Activated CD8-positive, alpha-beta T cell treated with anti-CD3 and anti-CD28 coated beads for 36 hours (primary cell): ENCODE measurements at regions of chr1 and their contacts with region 1.

Region 1: DNA sequence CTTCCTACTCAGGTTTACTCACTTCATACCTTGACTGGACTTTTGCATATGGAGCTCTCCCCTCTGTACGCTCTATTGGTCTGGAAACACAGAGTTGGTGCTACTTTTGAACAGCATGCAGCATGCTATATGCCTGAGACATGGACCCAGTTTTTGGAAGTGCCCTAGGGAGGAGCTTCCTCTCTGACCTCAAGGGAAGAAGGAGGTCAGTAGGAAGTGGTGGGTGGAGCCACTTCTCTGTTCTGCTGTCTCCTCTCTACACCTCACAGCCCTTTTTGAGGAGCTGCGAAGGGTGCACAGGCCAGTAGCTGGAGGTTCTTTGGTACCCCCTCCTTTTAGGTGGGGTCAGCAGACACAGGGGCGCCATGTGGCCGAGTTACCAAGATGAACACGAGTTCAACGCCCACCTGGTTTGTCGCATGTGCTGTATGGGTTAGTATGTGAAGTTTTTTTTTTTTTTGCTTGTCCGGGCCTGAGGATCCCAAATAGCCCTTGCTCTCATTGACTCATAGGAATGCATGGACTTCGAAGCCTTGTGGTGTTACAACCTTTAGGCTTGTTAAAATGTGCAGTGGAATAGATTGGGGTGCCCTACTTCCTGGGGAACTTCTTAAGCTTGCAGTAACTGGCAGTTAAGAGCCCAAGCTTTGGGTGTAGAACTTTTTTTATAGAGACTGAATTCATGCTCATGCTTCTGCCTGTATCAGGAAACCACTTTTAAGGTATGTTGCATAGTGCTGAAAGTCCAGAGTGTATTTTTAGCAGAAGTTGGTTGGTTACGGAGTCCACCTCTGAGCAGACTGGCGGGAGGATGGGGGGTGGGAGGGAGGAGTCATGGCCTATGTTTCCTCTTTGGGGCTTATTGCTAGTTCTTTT is 10.7 kb downstream of the MACF1 start:
- DNase-seq: peak; percentile 65
- ATAC-seq: peak; percentile 75
- H3K4me3 Mint-ChIP-seq: peak overlapping the region; percentile 79
- H3K27ac Mint-ChIP-seq: peak overlapping the region; percentile 90
- H3K4me1 Mint-ChIP-seq: peaks cover 45% of the 10 kb centered on the region
- H3K27me3 Mint-ChIP-seq: no peaks in the 10 kb centered on the region
- CTCF ChIP-seq: no peak

Region 2: DNA sequence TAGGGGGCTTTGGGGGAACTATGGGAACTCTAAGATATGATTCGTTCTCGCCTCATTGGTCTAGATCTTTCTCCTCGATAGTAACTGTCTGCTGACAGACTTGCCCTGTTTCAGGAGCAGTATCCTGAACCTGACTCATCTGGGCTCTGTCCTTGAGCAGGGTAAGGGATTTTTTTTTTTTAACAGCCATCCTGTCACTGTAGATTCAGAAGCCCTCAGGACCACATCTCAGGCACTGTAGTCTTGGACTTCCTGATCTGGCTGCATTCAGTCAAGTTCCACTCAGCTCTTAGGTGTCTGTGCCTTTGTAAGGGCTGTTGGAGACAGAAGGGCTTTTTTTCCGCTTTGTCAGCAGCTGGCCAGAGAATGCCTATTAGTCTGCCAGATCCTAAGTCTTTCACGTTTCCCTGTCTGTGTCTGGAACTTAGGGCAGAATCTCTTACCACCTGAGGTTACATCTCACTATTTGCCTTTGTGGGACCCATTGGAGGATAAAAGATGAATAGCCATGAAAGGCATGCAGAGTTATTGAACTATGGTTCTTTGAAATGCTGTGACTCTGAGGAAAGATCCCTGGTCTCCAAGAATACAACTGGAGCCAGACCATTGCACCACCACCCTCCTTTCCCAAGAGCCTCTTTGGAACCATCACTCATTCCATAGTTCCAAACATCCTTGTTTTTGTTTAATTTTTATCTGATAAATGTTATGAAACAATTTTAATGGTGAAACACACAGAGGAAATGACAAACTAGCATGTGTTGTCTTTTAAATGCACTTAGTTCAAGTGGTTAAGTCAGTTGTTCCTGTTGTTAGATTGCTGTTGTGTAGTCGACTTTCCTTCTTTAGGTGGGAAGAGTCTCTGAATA is 60.4 kb before region 1 on chr1:
- CTCF ChIA-PET with region 1: no interaction called
- POLR2A ChIA-PET with region 1: no interaction called
- intact Hi-C with region 1: no loop called
- DNase-seq: no peak
- ATAC-seq: no peak
- H3K4me3 Mint-ChIP-seq: no peak overlapping the region
- H3K27ac Mint-ChIP-seq: no peak overlapping the region
- H3K4me1 Mint-ChIP-seq: peaks cover 11% of the 10 kb centered on the region
- H3K27me3 Mint-ChIP-seq: no peaks in the 10 kb centered on the region
- CTCF ChIP-seq: no peak

Region 3: DNA sequence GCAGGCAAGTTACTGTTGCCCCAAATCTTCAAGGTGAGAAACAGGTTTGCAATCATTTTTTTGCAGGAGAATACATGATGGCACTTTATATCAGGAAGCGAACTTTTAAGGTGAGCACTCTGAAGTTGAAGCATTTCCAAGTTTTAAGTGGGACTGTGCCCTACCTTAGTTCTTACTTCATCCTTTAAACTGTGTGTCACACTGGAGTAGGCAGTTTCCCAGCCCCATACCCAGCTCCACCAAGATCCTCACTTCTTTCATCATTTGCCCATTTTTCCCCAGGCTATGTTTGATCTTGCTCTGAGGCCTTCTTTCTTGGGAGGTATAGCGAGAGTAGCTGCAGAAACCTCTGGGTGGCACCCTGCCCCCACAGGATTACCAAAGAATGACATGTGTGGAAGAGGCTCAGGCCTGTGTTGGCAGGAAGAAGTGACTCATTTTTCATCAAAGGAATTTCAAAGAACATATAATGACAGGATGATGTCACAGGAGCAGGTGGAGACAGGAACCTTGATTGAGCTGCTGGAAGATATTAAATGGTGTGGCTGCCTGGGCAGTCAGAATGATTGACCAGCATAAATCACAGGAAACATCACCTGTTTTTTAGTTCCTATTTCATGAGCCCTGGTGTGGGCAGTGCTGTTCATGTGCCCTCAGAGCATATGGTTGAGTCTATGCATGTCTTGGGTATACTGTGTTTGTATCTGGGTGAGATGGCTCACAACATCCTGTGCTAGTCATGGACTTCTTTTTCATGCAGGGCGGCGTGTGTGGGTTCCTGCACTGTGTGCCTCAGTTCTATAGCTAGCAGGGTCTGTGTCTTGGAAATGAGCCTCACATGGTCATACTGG is 31.5 kb before region 1 on chr1:
- CTCF ChIA-PET with region 1: interaction called, 13 read pairs
- POLR2A ChIA-PET with region 1: no interaction called
- intact Hi-C with region 1: no loop called
- DNase-seq: peak; percentile 93
- ATAC-seq: peak; percentile 84
- H3K4me3 Mint-ChIP-seq: peak overlapping the region; percentile 32
- H3K27ac Mint-ChIP-seq: peak overlapping the region; percentile 94
- H3K4me1 Mint-ChIP-seq: peaks cover 46% of the 10 kb centered on the region
- H3K27me3 Mint-ChIP-seq: no peaks in the 10 kb centered on the region
- CTCF ChIP-seq: peak; percentile 61

Region 4: DNA sequence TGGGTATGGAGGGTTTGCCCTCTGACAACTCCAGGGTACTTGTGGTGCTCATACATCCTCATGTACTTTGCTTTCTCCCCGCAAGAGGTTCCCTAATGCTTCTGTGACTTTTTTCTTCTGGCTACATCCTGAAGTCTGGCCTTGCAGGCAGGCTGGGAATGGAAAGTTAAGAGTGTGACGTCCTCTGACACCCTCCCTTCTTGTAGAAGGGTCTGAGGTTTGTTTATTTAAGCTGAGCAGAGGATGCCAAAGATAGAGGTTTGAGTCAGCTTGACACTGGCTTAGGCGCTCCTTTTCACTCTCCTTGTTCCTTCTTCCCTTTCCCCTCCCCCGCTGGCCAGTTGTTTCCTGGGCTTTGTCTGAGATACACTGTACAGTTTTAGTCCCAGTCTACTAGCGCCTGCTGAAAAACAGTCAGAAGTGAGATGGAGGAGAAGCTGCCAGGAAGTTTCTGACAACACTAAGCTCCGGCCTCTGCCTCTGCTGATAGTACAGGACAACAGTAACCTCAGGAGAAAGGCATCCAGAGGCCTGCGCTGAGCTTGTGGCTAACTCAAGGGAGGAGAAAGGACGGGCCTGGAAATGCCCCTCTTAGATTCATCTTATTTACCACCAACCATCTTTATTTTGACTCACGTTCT is 10.7 kb before region 1 on chr1 and contains the start of gene MACF1:
- CTCF ChIA-PET with region 1: interaction called, 14 read pairs
- POLR2A ChIA-PET with region 1: interaction called, 85 read pairs
- intact Hi-C with region 1: loop called (anchors 1 kb)
- DNase-seq: peak; percentile 65
- ATAC-seq: peak; percentile 48
- H3K4me3 Mint-ChIP-seq: peak within 1 kb of the TSS; percentile 84
- H3K27ac Mint-ChIP-seq: peak within 1 kb of the TSS; percentile 95
- H3K4me1 Mint-ChIP-seq: peaks cover 42% of the 10 kb centered on the region
- H3K27me3 Mint-ChIP-seq: no peaks in the 10 kb centered on the region
- CTCF ChIP-seq: no peak
- total RNA-seq, gene MACF1: 201 to 215 TPM

Region 5: GRCh38 chr1:39238476-39238875 is 23.2 kb after region 1 on chr1:
- CTCF ChIA-PET with region 1: no interaction called
- POLR2A ChIA-PET with region 1: interaction called, 10 read pairs
- intact Hi-C with region 1: no loop called
- DNase-seq: no peak
- ATAC-seq: no peak
- H3K4me3 Mint-ChIP-seq: no peak overlapping the region
- H3K27ac Mint-ChIP-seq: peak overlapping the region; percentile 26
- H3K4me1 Mint-ChIP-seq: peaks cover 34% of the 10 kb centered on the region
- H3K27me3 Mint-ChIP-seq: no peaks in the 10 kb centered on the region
- CTCF ChIP-seq: no peak